HepG2 (cell line): ENCODE measurements at regions of chr17 and their contacts with region 1.

Region 1: GRCh38 chr17:10618202-10618635 is 38.9 kb downstream of the MYH3 start:
- DNase-seq: peak; percentile 70
- ATAC-seq: peak; percentile 94
- H3K4me3 ChIP-seq: no peak overlapping the region
- H3K27ac ChIP-seq: no peak overlapping the region
- H3K4me1 ChIP-seq: no peaks in the 10 kb centered on the region
- H3K27me3 ChIP-seq: peaks cover 0 to 5% of the 10 kb centered on the region in 2 experiments; a peak in 2 of 5 replicates
- CTCF ChIP-seq: peak; percentile 93
- EP300 ChIP-seq: no peak
- POLR2A ChIP-seq: no peak
- RAD21 ChIP-seq: peak; percentile 60; the same call in 1 of the 2 replicates

Region 2: GRCh38 chr17:9968902-9969617 is 649.2 kb before region 1 on chr17:
- CTCF ChIA-PET with region 1: no interaction called
- POLR2A ChIA-PET with region 1: no interaction called
- in situ Hi-C with region 1: loop called (anchors 10 kb)
- intact Hi-C with region 1: loop called (anchors 10 kb)
- DNase-seq: no peak
- ATAC-seq: no peak
- H3K4me3 ChIP-seq: no peak overlapping the region
- H3K27ac ChIP-seq: no peak overlapping the region
- H3K4me1 ChIP-seq: no peaks in the 10 kb centered on the region
- H3K27me3 ChIP-seq: peaks cover 1 to 25% of the 10 kb centered on the region in 2 experiments; a peak in 4 of 5 replicates
- CTCF ChIP-seq: no peak
- EP300 ChIP-seq: no peak
- POLR2A ChIP-seq: no peak
- RAD21 ChIP-seq: no peak

Region 3: DNA sequence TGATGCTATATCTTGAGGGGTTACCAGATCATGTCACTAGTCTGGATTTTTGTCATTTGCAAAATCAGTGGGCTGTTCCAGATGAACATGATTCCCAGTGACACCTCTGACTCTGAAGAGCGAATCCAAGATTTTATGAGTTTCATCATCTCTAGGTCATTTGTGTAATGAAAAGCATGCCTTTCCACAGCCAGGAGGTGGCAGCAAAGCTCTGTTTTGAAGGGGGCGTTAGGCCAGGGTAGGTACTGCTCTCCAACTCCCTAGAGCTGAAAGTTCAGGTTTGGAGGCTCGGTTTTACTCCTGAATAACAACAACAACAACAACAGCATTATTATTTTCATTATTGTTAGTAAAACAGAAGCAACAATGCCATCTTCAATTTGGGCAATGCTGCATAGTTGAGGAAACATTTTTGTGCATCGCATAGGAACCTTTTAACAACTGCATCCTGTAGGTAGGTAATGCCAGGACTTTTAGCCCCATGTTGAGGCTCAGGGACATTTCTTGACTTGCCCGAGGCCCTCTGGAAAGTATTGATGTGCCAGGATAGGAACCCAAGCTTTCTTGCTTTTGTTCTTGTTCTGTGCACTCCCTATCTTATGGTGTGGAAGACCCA is 322.4 kb before region 1 on chr17:
- CTCF ChIA-PET with region 1: interaction called, 11 read pairs
- POLR2A ChIA-PET with region 1: no interaction called
- in situ Hi-C with region 1: no loop called
- intact Hi-C with region 1: loop called (anchors 1 kb)
- DNase-seq: peak; percentile 52
- ATAC-seq: peak; percentile 90
- H3K4me3 ChIP-seq: no peak overlapping the region
- H3K27ac ChIP-seq: no peak overlapping the region
- H3K4me1 ChIP-seq: peaks cover 5% of the 10 kb centered on the region
- H3K27me3 ChIP-seq: 0 out of 5 replicates have a peak, but pooled peaks cover 0 to 3% of the 10 kb centered on the region in 2 experiments
- CTCF ChIP-seq: peak; percentile 75
- EP300 ChIP-seq: no peak
- POLR2A ChIP-seq: no peak
- RAD21 ChIP-seq: peak; percentile 39; the same call in 1 of the 2 replicates

Region 4: DNA sequence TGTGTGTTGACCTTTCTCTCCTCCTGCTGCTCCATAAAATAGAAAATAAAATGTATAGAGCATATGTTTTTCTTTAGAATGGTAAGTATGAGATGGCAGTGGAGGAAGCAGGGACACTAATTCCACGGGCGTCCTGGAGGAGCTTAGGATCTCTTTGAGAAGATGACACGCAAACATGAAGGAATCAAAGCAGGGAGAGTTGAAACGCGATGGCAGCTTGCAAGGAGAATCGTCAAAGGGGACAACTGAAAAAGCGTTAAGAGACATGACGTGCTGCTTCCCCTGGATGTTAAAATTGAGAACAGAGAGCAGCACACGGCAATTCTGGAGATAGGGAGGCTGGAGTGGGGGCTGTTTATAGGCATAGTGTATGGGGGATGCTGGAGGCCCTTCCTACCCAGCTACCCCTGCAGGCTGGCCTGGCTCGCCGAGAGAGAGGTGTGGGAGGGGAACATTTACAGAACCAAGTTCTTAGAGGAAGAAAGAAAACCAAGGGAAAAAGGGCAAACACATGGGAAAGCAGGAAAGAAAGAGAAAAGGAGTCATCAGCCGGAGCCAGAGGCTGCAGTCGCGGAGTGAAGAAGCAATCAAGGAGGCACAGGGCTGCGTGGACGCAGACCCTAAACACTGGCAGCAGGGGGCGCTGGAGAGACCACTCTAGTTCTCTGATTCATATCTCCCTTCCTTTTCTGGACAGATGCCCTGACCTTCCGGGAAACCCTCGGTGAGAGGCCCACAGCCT is 301.2 kb before region 1 on chr17:
- CTCF ChIA-PET with region 1: interaction called, 13 read pairs
- POLR2A ChIA-PET with region 1: no interaction called
- in situ Hi-C with region 1: no loop called
- intact Hi-C with region 1: no loop called
- DNase-seq: peak; percentile 20
- ATAC-seq: peak; percentile 80
- H3K4me3 ChIP-seq: no peak overlapping the region
- H3K27ac ChIP-seq: no peak overlapping the region
- H3K4me1 ChIP-seq: no peaks in the 10 kb centered on the region
- H3K27me3 ChIP-seq: peaks cover 0 to 4% of the 10 kb centered on the region in 2 experiments; a peak in 2 of 5 replicates
- CTCF ChIP-seq: peak; percentile 54
- EP300 ChIP-seq: no peak
- POLR2A ChIP-seq: no peak
- RAD21 ChIP-seq: no peak

Region 5: DNA sequence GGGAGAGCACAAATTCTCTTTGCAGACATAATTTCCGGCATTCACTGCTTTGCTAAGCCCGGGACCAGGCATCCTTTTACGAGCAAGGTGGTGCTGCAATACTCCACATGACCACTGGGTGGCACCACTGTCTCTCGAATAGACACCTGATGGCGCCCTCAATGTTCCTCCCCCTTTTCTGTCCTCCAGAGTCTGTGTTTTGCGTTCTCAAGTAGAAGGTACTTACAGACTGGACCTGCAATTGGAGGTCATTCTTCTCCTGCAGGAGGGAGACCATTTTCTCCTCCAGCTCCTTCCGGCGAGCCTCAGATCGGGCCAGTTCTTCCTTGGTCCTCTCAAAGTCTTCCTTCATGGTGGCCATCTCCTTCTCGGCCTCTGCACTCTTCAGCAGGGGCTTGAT is 290.6 kb before region 1 on chr17:
- CTCF ChIA-PET with region 1: interaction called, 53 read pairs
- POLR2A ChIA-PET with region 1: no interaction called
- in situ Hi-C with region 1: loop called (anchors 5 kb)
- intact Hi-C with region 1: loop called (anchors 1 kb)
- DNase-seq: peak; percentile 64
- ATAC-seq: peak; percentile 72
- H3K4me3 ChIP-seq: no peak overlapping the region
- H3K27ac ChIP-seq: no peak overlapping the region
- H3K4me1 ChIP-seq: no peaks in the 10 kb centered on the region
- H3K27me3 ChIP-seq: peaks cover 0 to 1% of the 10 kb centered on the region in 2 experiments; a peak in 2 of 5 replicates
- CTCF ChIP-seq: peak; percentile 91
- EP300 ChIP-seq: no peak
- POLR2A ChIP-seq: no peak
- RAD21 ChIP-seq: peak; percentile 81

Region 6: GRCh38 chr17:10370209-10370608 is 248.0 kb before region 1 on chr17:
- CTCF ChIA-PET with region 1: interaction called, 3 read pairs
- POLR2A ChIA-PET with region 1: no interaction called
- in situ Hi-C with region 1: no loop called
- intact Hi-C with region 1: loop called (anchors 1 kb)
- DNase-seq: no peak
- ATAC-seq: no peak
- H3K4me3 ChIP-seq: no peak overlapping the region
- H3K27ac ChIP-seq: no peak overlapping the region
- H3K4me1 ChIP-seq: no peaks in the 10 kb centered on the region
- H3K27me3 ChIP-seq: no peaks in the 10 kb centered on the region
- CTCF ChIP-seq: no peak
- EP300 ChIP-seq: no peak
- POLR2A ChIP-seq: no peak
- RAD21 ChIP-seq: no peak

Region 7: DNA sequence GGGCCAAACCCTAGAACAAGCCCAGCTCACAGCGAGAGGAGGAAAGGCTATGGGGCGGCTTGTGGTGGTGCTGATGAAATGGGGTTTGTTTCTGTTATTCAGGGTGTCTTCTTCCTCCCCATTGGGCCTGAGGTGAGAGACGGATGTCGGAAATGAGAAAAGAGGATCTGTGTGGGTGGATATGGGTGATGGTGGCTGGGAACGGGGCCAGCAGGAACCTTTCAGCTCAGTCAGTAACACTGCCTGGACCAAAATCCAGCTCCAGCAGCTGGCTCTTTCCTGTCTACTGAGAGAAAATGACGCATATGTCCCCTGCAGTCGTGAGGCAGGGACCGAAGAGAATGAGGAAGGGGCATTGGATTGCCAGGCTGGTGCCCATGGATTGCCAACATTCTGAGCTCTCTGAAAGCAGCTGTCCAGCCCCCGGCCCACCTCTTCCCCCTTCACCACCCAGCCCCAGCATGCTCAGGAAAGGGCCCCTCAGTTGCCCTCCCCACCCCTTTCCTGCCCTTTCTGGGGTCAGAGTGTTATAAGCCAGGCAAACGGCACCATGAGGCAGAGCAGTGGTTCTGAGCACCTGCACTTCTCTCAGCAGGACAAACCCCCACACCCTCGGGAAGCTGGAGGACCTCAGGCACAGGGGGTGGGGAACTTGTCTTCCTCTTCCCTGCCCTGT is 34.9 kb after region 1 on chr17:
- CTCF ChIA-PET with region 1: no interaction called
- POLR2A ChIA-PET with region 1: no interaction called
- in situ Hi-C with region 1: no loop called
- intact Hi-C with region 1: no loop called
- DNase-seq: no peak
- ATAC-seq: no peak
- H3K4me3 ChIP-seq: no peak overlapping the region
- H3K27ac ChIP-seq: no peak overlapping the region
- H3K4me1 ChIP-seq: no peaks in the 10 kb centered on the region
- H3K27me3 ChIP-seq: no peaks in the 10 kb centered on the region
- CTCF ChIP-seq: no peak
- EP300 ChIP-seq: no peak
- POLR2A ChIP-seq: no peak
- RAD21 ChIP-seq: no peak